Activated naive CD8-positive, alpha-beta T cell treated with anti-CD3 and anti-CD28 coated beads, Interleukin-2, amount 10 ng/mL, durations not matched to agents 7 days and 5 days (primary cell): ENCODE measurements at regions of chr3 and their contacts with region 1.

Region 1: DNA sequence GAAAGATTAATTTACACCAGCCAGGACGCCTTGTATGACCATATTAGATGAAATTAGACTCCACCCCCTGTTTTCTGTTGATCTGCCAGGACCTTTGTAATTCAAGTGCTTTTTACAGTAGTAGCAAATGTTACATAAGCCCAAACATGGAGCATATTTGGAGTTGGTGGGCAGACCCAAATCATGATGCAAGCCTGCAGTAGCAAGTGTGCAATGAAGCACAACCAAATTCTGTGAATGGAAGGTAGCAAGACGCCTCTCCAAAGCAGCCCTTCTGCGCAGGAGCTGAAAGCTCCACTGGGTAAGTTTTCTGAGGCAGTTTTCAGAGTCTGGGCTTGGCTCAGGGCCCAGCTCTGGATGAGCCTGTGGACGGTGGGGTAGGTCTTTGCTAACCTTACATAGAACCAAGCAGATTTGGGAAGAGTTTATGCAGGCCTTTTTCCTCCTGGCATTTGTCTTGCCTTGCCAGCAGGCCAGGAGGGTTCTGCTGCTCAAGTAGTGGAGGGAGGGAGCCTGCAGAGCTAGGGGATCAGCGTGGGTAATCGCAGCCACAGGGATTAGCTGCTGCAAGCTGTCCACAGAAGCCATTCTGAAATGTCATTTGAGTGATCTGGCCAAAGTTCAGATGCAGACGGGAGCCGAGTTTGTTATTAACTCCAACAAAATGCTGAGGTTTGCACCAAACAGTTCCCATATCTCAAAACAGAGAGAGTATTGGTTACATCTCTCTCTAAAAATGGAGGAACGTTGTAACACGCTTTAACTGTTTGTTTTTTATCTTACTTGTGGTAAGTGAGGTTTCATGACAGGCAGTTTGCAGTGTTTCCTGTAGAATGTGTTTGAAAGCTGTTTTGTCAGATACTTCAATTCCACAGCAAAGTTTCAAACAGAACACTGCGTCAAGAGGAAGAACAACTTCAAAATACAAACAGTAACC is 55.4 kb downstream of the PSMD6 start:
- DNase-seq: peak; percentile 60
- ATAC-seq: peak; percentile 62
- H3K4me3 Mint-ChIP-seq: peak overlapping the region; percentile 83
- H3K27ac Mint-ChIP-seq: peak overlapping the region; percentile 96
- H3K4me1 Mint-ChIP-seq: peaks cover 60% of the 10 kb centered on the region
- H3K27me3 Mint-ChIP-seq: no peaks in the 10 kb centered on the region

Region 2: GRCh38 chr3:63685340-63685739 is 282.6 kb before region 1 on chr3:
- POLR2A ChIA-PET with region 1: no interaction called
- DNase-seq: no peak
- ATAC-seq: no peak
- H3K4me3 Mint-ChIP-seq: no peak overlapping the region
- H3K27ac Mint-ChIP-seq: no peak overlapping the region
- H3K4me1 Mint-ChIP-seq: no peaks in the 10 kb centered on the region
- H3K27me3 Mint-ChIP-seq: no peaks in the 10 kb centered on the region

Region 3: DNA sequence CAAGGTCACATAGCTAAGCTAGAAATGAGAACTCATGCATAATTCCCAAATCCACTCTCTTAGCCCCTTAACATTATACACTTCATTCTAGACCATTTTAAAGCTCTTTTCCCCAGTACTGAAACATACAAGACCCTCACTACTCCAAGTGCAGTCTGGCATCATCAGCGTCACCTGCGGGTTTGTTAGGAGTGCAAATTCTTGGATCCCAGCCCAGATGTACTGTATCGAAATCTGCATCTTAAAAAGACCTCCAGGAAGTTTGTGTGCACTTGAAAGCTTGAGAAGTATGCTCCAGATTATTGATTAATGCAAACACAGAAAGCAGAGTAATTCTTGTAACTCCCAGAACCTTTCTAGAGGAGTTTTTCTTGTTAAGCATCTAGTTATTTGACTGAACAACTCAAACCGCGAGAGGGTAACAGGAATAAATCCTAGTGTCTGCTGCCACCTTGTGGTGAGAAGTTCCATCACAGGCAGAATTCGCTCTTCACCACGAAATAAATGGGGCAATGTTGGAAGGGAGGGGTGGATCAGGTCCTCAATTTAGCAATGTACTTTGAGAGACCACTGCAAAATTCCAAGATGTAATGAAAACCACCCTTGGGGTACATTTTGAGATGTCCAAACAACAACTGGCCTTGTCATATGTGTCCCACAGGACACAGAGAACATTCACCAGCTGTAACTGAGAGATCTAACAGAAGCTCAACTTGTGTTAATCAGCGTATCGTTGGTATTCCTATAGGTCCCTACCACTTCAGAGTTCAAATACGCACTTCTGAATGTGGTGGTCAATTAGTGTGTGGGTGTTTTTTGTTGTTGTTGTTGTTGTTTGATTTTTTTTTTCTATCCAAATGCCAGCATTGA is 149.4 kb before region 1 on chr3:
- POLR2A ChIA-PET with region 1: no interaction called
- DNase-seq: peak; percentile 40
- ATAC-seq: peak; percentile 39
- H3K4me3 Mint-ChIP-seq: no peak overlapping the region
- H3K27ac Mint-ChIP-seq: no peak overlapping the region
- H3K4me1 Mint-ChIP-seq: peaks cover 2% of the 10 kb centered on the region
- H3K27me3 Mint-ChIP-seq: no peaks in the 10 kb centered on the region

Region 4: GRCh38 chr3:63911873-63912767 is 55.8 kb before region 1 on chr3 and contains the start of gene SCAANT1:
- POLR2A ChIA-PET with region 1: interaction called, 11 read pairs
- DNase-seq: peak; percentile 87
- ATAC-seq: peak; percentile 79
- H3K4me3 Mint-ChIP-seq: peak within 1 kb of the TSS; percentile 95
- H3K27ac Mint-ChIP-seq: peak within 1 kb of the TSS; percentile 97
- H3K4me1 Mint-ChIP-seq: peaks cover 42% of the 10 kb centered on the region
- H3K27me3 Mint-ChIP-seq: no peaks in the 10 kb centered on the region
- total RNA-seq, gene SCAANT1: 1.8 TPM in 1 of 2 experiments, not detected in the other

Region 5: DNA sequence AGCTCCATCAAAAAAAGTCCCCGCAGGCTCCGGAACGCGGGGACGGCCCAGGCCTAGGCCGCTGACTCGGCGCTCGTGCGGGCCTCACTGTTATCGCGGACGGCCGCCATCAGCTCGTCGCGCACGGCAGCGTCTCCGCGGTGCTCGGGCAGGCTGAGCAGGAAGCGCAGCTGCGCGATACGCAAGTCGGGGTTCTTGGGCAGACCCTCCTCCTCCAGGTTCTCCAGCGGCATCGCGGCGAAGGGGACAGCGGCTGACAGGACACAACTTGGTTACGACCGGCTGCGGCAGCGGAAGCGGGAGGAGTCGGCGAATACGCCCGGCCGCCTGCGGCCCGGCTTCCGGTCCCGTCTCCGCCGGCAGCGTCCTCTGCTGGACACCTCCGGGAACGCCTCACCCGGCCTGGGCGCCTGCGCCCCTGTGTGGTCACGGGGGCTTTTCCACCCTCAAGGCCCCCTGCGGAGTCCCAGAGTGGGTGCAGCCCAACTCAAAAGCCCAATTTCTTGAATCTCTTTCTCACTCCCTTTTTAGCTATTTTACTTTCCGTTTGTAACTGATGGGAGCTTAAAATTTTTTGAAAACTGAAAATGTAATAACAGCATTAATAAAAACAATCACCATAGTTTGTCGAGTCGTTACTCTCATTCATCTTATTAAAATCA is 55.4 kb after region 1 on chr3 and contains the start of gene PSMD6:
- POLR2A ChIA-PET with region 1: interaction called, 11 read pairs
- DNase-seq: peak; percentile 97
- ATAC-seq: peak; percentile 90
- H3K4me3 Mint-ChIP-seq: peak within 1 kb of the TSS; percentile 78
- H3K27ac Mint-ChIP-seq: peak within 1 kb of the TSS; percentile 73
- H3K4me1 Mint-ChIP-seq: peaks cover 22% of the 10 kb centered on the region
- H3K27me3 Mint-ChIP-seq: peaks cover 9% of the 10 kb centered on the region
- total RNA-seq, gene PSMD6: 67.2 to 70.1 TPM